AG04450 (cell line): ENCODE measurements at regions of chr2 and their contacts with region 1.

Region 1: GRCh38 chr2:230814616-230815015 is 50.1 kb upstream of the ITM2C start:
- DNase-seq: peak; percentile 15
- H3K4me3 ChIP-seq: no peak overlapping the region
- H3K27ac ChIP-seq: no peak overlapping the region
- H3K27me3 ChIP-seq: no peaks in the 10 kb centered on the region
- CTCF ChIP-seq: peak; percentile 70

Region 2: GRCh38 chr2:230614913-230615332 is 199.7 kb before region 1 on chr2:
- CTCF ChIA-PET with region 1: interaction called, 10 read pairs
- POLR2A ChIA-PET with region 1: no interaction called
- DNase-seq: no peak
- H3K4me3 ChIP-seq: no peak overlapping the region
- H3K27ac ChIP-seq: no peak overlapping the region
- H3K27me3 ChIP-seq: no peaks in the 10 kb centered on the region
- CTCF ChIP-seq: no peak